Activated naive CD4-positive, alpha-beta T cell treated with anti-CD3 and anti-CD28 coated beads for 36 hours (primary cell): ENCODE measurements at regions of chr7 and their contacts with region 1.

Region 1: GRCh38 chr7:132488634-132489302 is 87.5 kb downstream of the PLXNA4 start:
- DNase-seq: no peak
- H3K4me3 Mint-ChIP-seq: no peak overlapping the region
- H3K27ac Mint-ChIP-seq: no peak overlapping the region
- H3K4me1 Mint-ChIP-seq: peaks cover 34% of the 10 kb centered on the region
- H3K27me3 Mint-ChIP-seq: no peaks in the 10 kb centered on the region

Region 2: GRCh38 chr7:132394283-132395198 is 94.2 kb before region 1 on chr7:
- CTCF ChIA-PET with region 1: no interaction called
- intact Hi-C with region 1: loop called (anchors 1 kb)
- DNase-seq: peak; percentile 43
- H3K4me3 Mint-ChIP-seq: no peak overlapping the region
- H3K27ac Mint-ChIP-seq: no peak overlapping the region
- H3K4me1 Mint-ChIP-seq: peaks cover 5% of the 10 kb centered on the region
- H3K27me3 Mint-ChIP-seq: peaks cover 2% of the 10 kb centered on the region

Region 3: GRCh38 chr7:132451161-132451560 is 37.6 kb before region 1 on chr7:
- CTCF ChIA-PET with region 1: no interaction called
- intact Hi-C with region 1: loop called (anchors 1 kb)
- DNase-seq: no peak
- H3K4me3 Mint-ChIP-seq: no peak overlapping the region
- H3K27ac Mint-ChIP-seq: no peak overlapping the region
- H3K4me1 Mint-ChIP-seq: peaks cover 46% of the 10 kb centered on the region
- H3K27me3 Mint-ChIP-seq: no peaks in the 10 kb centered on the region

Region 4: GRCh38 chr7:132654150-132654549 is 165.4 kb after region 1 on chr7:
- CTCF ChIA-PET with region 1: no interaction called
- intact Hi-C with region 1: loop called (anchors 2 kb)
- DNase-seq: peak; percentile 53
- H3K4me3 Mint-ChIP-seq: no peak overlapping the region
- H3K27ac Mint-ChIP-seq: peak overlapping the region; percentile 74
- H3K4me1 Mint-ChIP-seq: peaks cover 39% of the 10 kb centered on the region
- H3K27me3 Mint-ChIP-seq: no peaks in the 10 kb centered on the region

Region 5: GRCh38 chr7:133081599-133082389 is 593.0 kb after region 1 on chr7 and contains the start of gene CHCHD3:
- CTCF ChIA-PET with region 1: no interaction called
- intact Hi-C with region 1: loop called (anchors 5 kb)
- DNase-seq: peak; percentile 99
- H3K4me3 Mint-ChIP-seq: peak within 1 kb of the TSS; percentile 78
- H3K27ac Mint-ChIP-seq: peak within 1 kb of the TSS; percentile 78
- H3K4me1 Mint-ChIP-seq: peaks cover 27% of the 10 kb centered on the region
- H3K27me3 Mint-ChIP-seq: no peaks in the 10 kb centered on the region
- total RNA-seq, gene CHCHD3: 62.0 to 65.0 TPM